Activated naive CD8-positive, alpha-beta T cell treated with anti-CD3 and anti-CD28 coated beads, Interleukin-2, amount 10 ng/mL, durations not matched to agents 7 days and 5 days (primary cell): ENCODE measurements at regions of chr17 and their contacts with region 1.

Region 1: DNA sequence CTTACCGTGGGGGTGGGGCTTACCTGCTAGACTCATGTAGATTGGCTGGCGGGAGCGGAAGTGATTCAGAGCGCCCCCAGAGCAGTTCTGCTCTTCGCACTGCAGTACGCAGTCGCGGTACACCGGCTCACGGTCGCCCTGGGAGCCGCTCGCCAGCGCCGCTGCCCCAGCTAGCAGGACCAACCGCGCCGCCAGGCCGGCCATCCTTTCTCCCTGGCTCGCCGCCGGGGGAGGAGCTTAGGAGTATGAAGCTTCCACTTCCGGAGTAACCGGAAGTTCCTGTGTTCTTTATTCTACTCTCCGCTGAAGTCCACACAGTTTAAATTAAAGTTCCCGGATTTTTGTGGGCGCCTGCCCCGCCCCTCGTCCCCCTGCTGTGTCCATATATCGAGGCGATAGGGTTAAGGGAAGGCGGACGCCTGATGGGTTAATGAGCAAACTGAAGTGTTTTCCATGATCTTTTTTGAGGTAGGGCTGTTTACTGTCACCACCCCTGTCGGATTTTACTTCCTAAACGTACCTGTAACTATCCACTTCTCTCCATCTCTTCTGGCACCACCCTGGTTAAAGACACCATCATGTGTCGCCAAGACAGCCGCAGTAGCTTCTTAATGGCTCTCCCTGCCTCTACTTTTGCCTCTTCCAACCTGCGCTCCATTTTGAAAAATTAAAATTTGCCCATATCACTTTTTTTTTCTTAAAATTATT is at the start of gene PGAP3:
- DNase-seq: peak; percentile 88
- ATAC-seq: peak; percentile 94
- H3K4me3 Mint-ChIP-seq: peak within 1 kb of the TSS; percentile 88
- H3K27ac Mint-ChIP-seq: peak within 1 kb of the TSS; percentile 89
- H3K4me1 Mint-ChIP-seq: peaks cover 14% of the 10 kb centered on the region
- H3K27me3 Mint-ChIP-seq: no peaks in the 10 kb centered on the region
- total RNA-seq, gene PGAP3: 18.3 to 23.9 TPM

Region 2: GRCh38 chr17:39676198-39676819 is 11.7 kb before region 1 on chr17:
- POLR2A ChIA-PET with region 1: interaction called, 46 read pairs
- DNase-seq: peak; percentile 67
- ATAC-seq: peak; percentile 85
- H3K4me3 Mint-ChIP-seq: no peak overlapping the region
- H3K27ac Mint-ChIP-seq: peak overlapping the region; percentile 81
- H3K4me1 Mint-ChIP-seq: peaks cover 46% of the 10 kb centered on the region
- H3K27me3 Mint-ChIP-seq: peaks cover 3% of the 10 kb centered on the region

Region 3: DNA sequence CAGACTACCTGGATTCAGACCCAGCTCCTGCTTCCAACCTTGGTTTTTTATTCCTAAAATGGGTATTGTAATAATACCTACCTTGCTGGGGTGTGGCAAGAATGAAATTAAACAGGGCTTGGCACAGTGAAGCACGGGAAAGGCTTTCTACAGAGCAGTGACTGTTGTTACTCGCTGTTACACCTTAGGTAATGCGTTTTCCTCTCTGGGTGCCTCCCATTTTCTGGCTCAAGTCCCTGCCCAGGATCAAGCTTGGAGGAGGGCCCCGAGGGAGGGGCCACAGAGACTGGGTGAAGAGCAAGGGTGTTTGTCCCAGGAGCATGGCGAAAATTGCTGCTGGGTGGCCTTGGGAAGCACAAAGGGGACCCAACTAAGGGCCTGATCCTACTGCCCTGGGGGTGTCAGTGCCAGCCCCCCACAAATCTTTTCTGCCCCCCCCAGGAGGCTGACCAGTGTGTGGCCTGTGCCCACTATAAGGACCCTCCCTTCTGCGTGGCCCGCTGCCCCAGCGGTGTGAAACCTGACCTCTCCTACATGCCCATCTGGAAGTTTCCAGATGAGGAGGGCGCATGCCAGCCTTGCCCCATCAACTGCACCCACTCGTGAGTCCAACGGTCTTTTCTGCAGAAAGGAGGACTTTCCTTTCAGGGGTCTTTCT is 29.0 kb after region 1 on chr17:
- POLR2A ChIA-PET with region 1: no interaction called
- DNase-seq: no peak
- ATAC-seq: no peak
- H3K4me3 Mint-ChIP-seq: no peak overlapping the region
- H3K27ac Mint-ChIP-seq: no peak overlapping the region
- H3K4me1 Mint-ChIP-seq: no peaks in the 10 kb centered on the region
- H3K27me3 Mint-ChIP-seq: no peaks in the 10 kb centered on the region